HepG2 (cell line): ENCODE measurements at regions of chr2 and their contacts with region 1.

Region 1: GRCh38 chr2:226159754-226160479 is 639.7 kb downstream of the IRS1 start:
- DNase-seq: peak; percentile 99
- ATAC-seq: peak; percentile 97
- H3K4me3 ChIP-seq: peak overlapping the region in 2 of 3 experiments; percentile 3 to 14; a peak in 1 of 6 replicates
- H3K27ac ChIP-seq: peak overlapping the region; percentile 97
- H3K4me1 ChIP-seq: peaks cover 73% of the 10 kb centered on the region
- H3K27me3 ChIP-seq: no peaks in the 10 kb centered on the region; a peak in 1 of 5 replicates
- CTCF ChIP-seq: no peak
- EP300 ChIP-seq: peak; percentile 94 to 100; a peak in 3 of 4 replicates
- POLR2A ChIP-seq: no peak
- RAD21 ChIP-seq: 0 out of 2 replicates have a peak, but pooled peaks have one; percentile 9

Region 2: GRCh38 chr2:226118471-226119430 is 41.2 kb before region 1 on chr2:
- CTCF ChIA-PET with region 1: no interaction called
- POLR2A ChIA-PET with region 1: interaction called, 16 read pairs
- in situ Hi-C with region 1: no loop called
- intact Hi-C with region 1: loop called (anchors 2 kb)
- DNase-seq: peak; percentile 81
- ATAC-seq: peak; percentile 81
- H3K4me3 ChIP-seq: peak overlapping the region; percentile 42 to 51 (median 42); a peak in 5 of 6 replicates
- H3K27ac ChIP-seq: peak overlapping the region; percentile 54
- H3K4me1 ChIP-seq: peaks cover 65% of the 10 kb centered on the region
- H3K27me3 ChIP-seq: no peaks in the 10 kb centered on the region
- CTCF ChIP-seq: no peak
- EP300 ChIP-seq: peak; percentile 88 to 94; a peak in 3 of 4 replicates
- POLR2A ChIP-seq: no peak
- RAD21 ChIP-seq: no peak

Region 3: DNA sequence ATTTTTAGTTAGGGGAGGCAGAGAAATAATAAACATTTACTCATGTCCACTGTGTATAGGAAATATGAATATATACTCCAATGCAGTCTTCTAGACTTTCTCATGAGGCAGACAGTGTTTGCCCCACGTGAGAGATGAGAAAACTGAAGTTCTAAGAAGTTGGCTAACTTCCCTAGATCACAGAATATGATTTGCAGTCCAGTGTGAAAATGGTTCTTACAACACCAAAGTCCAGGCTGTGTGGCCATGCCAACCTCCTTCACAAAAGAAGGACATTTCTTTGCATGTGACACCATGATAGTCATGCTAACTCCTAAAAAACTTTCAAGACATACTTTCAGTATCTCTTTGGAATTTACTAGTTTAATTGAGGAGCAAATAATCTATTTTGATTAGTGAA is 496.0 kb after region 1 on chr2:
- CTCF ChIA-PET with region 1: no interaction called
- POLR2A ChIA-PET with region 1: no interaction called
- in situ Hi-C with region 1: no loop called
- intact Hi-C with region 1: loop called (anchors 5 kb)
- DNase-seq: no peak
- ATAC-seq: no peak
- H3K4me3 ChIP-seq: no peak overlapping the region
- H3K27ac ChIP-seq: no peak overlapping the region
- H3K4me1 ChIP-seq: peaks cover 94% of the 10 kb centered on the region
- H3K27me3 ChIP-seq: no peaks in the 10 kb centered on the region
- CTCF ChIP-seq: no peak
- EP300 ChIP-seq: no peak
- POLR2A ChIP-seq: no peak
- RAD21 ChIP-seq: no peak